ENCODE measurements at regions of chr10 and their contacts with region 1.

Region 1: DNA sequence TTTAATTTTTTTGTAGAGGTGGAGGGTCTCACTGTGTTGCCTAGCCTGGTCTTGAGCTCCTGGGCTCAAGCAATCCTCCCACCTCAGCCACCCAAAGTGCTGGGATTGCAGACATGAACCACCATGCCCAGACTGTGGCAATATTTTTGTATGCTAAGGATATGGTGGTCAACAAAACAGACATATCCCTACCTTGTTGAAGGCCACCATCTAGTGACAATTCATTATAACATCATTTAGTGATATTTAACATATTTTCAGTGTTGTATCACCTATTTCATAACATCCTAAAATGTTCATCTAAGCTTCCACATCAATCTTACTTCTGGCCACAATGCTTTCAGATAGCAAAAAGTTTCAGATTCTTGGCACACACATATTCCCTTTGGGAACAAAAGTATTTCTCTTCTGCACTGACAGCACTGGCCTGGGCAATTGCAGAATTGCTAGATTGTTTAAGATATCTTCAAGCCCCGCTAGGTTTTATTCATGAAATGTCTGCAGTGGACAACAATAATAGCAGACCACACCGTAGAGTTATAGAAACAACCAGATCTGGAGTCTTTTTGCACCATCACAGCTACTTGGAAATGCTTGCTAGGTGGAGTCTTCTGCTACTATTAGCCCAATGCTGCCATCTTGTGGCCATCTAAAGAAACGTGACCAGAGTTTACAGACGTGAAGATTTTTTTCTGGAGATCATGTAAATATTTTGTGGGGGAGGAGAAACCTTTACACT is 58.4 kb downstream of the DNAJC12 start:
- DNase-seq: no peak
- ATAC-seq: peak; percentile 77
- H3K4me3 ChIP-seq: no peak overlapping the region
- H3K27ac ChIP-seq: no peak overlapping the region
- H3K4me1 ChIP-seq: peaks cover 38% of the 10 kb centered on the region
- H3K27me3 ChIP-seq: no peaks in the 10 kb centered on the region
- CTCF ChIP-seq: peak; percentile 65 to 88 (median 72); a peak in 5 of 6 replicates
- EP300 ChIP-seq: no peak
- POLR2A ChIP-seq: no peak
- RAD21 ChIP-seq: peak; percentile 96

Region 2: DNA sequence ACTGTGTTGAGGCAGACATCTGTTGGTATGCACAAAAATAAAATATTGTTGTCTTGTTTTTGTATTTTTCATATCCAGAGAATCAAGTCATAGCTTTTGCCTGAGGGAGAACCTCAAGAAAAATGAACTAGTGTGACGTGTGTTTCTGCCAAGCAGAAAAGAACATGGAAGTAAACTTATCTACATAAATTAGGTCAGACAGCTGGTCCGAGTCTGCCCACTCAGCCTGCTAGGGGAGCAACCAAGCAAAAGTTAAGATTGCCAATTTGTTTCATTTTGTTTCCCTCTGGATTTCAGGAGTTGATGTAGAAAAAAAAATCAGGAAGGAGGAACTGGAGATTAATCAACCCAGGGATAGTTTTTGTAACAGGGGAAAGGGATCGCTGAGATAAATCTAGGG is 1426.2 kb before region 1 on chr10:
- CTCF ChIA-PET with region 1: no interaction called
- POLR2A ChIA-PET with region 1: no interaction called
- RAD21 ChIA-PET with region 1: no interaction called
- SMC1A ChIA-PET with region 1: no interaction called
- in situ Hi-C with region 1: no loop called
- intact Hi-C with region 1: no loop called
- DNase-seq: no peak
- ATAC-seq: no peak
- H3K4me3 ChIP-seq: no peak overlapping the region
- H3K27ac ChIP-seq: no peak overlapping the region
- H3K4me1 ChIP-seq: no peaks in the 10 kb centered on the region
- H3K27me3 ChIP-seq: no peaks in the 10 kb centered on the region
- CTCF ChIP-seq: no peak
- EP300 ChIP-seq: no peak
- POLR2A ChIP-seq: no peak
- RAD21 ChIP-seq: no peak

Region 3: DNA sequence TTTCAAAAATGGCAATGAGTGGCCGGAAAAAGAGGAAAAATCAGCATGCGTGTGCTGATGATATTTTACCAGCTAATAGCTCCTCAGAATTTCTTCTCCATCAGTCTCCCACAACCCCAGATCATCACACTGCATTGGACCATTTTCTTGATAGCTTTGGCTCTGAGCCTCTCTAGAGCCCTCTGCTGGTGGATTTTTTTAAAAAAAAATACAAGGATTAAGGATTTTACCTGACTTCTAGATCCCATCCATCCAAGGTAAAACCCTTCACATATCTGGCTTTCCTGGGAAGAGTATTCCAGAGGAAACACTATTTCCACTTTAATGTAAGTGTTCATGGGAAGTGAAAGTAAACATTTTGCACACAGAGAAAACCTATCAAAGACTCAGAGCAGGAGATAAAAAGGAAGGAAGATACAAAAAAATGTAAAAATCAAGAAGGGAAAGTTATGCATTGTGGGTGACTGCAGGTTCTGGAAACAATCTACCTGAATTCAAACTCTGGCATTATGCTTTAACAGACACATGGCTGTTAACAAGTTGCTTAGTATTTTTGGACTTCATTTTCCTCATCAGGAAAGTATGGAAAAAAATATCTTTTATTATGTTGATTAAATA is 472.9 kb before region 1 on chr10:
- CTCF ChIA-PET with region 1: interaction called, 7 read pairs
- POLR2A ChIA-PET with region 1: no interaction called
- RAD21 ChIA-PET with region 1: interaction called, 3 read pairs
- SMC1A ChIA-PET with region 1: interaction called, 5 read pairs
- in situ Hi-C with region 1: no loop called
- intact Hi-C with region 1: loop called (anchors 5 kb)
- DNase-seq: no peak
- ATAC-seq: no peak; the same call in 2 of the 3 replicates
- H3K4me3 ChIP-seq: no peak overlapping the region
- H3K27ac ChIP-seq: no peak overlapping the region
- H3K4me1 ChIP-seq: no peaks in the 10 kb centered on the region
- H3K27me3 ChIP-seq: no peaks in the 10 kb centered on the region
- CTCF ChIP-seq: peak; percentile 32 to 47 (median 39); a peak in 5 of 6 replicates
- EP300 ChIP-seq: no peak
- POLR2A ChIP-seq: no peak
- RAD21 ChIP-seq: peak; percentile 37; the same call in 1 of the 2 replicates

Region 4: DNA sequence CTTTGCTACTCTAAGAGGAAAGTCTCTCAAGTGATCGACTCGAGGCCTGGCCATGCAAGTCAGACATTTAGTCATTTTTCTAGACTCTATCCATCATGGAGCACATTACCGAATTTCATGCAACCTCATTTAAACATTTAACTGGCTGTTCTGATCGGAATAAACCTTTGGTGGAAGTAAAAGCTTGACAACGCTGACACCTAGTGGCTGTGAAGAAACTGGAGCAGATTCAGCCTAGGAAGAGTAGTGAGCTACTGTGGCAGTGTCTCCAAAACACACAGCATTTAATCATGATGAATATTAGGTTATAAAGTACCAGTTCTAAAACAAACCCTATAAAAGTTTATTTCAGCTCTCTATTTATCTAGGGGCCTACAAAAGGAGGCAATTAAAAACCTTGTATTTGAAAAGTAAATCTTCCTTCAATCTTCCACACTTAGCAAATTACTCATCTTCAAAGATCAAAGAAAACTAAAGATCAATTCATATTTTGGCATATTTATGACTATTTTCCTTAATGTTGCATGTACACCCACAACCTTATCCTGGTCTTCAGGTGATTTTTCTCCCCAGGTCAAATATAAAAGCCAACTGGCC is 258.6 kb before region 1 on chr10:
- CTCF ChIA-PET with region 1: interaction called, 51 read pairs
- POLR2A ChIA-PET with region 1: interaction called, 7 read pairs
- RAD21 ChIA-PET with region 1: interaction called, 35 read pairs
- SMC1A ChIA-PET with region 1: interaction called, 35 read pairs
- in situ Hi-C with region 1: loop called (anchors 10 kb)
- intact Hi-C with region 1: loop called (anchors 1 kb)
- DNase-seq: peak; percentile 2
- ATAC-seq: peak; percentile 97
- H3K4me3 ChIP-seq: no peak overlapping the region
- H3K27ac ChIP-seq: no peak overlapping the region
- H3K4me1 ChIP-seq: no peaks in the 10 kb centered on the region
- H3K27me3 ChIP-seq: no peaks in the 10 kb centered on the region
- CTCF ChIP-seq: peak; percentile 65 to 85 (median 74)
- EP300 ChIP-seq: no peak
- POLR2A ChIP-seq: no peak
- RAD21 ChIP-seq: peak; percentile 89

Region 5: DNA sequence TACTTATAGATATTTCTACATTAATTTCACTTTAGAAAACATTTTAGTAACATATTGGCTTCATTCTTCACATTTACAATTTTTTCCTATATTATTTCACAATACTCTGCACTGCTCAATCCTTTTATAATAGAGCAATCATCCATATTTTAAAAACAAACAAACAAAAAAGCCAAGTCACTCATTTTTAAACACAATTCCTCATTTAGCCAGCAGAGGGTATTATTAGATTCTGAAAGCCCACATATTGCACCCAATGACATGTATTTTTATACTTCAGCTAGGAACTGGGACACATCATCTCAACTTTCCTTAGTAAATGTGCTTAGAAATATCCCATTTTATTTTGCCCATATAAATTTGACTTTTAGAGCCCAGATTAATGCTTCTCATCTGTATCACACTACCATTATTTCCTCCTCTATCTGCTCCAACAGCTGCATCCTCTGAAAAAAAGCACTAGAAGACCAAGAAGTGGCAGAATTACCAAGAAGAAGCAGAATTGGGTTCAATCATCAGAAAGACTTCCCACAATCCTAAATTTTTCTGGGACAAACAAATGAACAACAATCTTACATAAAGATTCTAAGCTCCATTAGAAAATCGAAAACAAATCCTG is 113.1 kb before region 1 on chr10:
- CTCF ChIA-PET with region 1: interaction called, 311 read pairs
- POLR2A ChIA-PET with region 1: interaction called, 13 read pairs
- RAD21 ChIA-PET with region 1: interaction called, 193 read pairs
- SMC1A ChIA-PET with region 1: interaction called, 221 read pairs
- in situ Hi-C with region 1: no loop called
- intact Hi-C with region 1: loop called (anchors 1 kb)
- DNase-seq: no peak
- ATAC-seq: peak; percentile 63
- H3K4me3 ChIP-seq: no peak overlapping the region
- H3K27ac ChIP-seq: no peak overlapping the region
- H3K4me1 ChIP-seq: no peaks in the 10 kb centered on the region
- H3K27me3 ChIP-seq: no peaks in the 10 kb centered on the region
- CTCF ChIP-seq: peak; percentile 12 to 53 (median 25); a peak in 3 of 6 replicates
- EP300 ChIP-seq: no peak
- POLR2A ChIP-seq: no peak
- RAD21 ChIP-seq: peak; percentile 59

Region 6: GRCh38 chr10:67705921-67706320 is 73.7 kb before region 1 on chr10:
- CTCF ChIA-PET with region 1: interaction called, 16 read pairs
- POLR2A ChIA-PET with region 1: no interaction called
- RAD21 ChIA-PET with region 1: interaction called, 4 read pairs
- SMC1A ChIA-PET with region 1: interaction called, 7 read pairs
- in situ Hi-C with region 1: no loop called
- intact Hi-C with region 1: no loop called
- DNase-seq: no peak
- ATAC-seq: no peak
- H3K4me3 ChIP-seq: no peak overlapping the region
- H3K27ac ChIP-seq: no peak overlapping the region
- H3K4me1 ChIP-seq: no peaks in the 10 kb centered on the region
- H3K27me3 ChIP-seq: no peaks in the 10 kb centered on the region
- CTCF ChIP-seq: no peak
- EP300 ChIP-seq: no peak
- POLR2A ChIP-seq: no peak
- RAD21 ChIP-seq: no peak

Region 7: GRCh38 chr10:67764012-67764822 is 15.4 kb before region 1 on chr10:
- CTCF ChIA-PET with region 1: interaction called, 16 read pairs
- POLR2A ChIA-PET with region 1: interaction called, 3 read pairs
- RAD21 ChIA-PET with region 1: interaction called, 23 read pairs
- SMC1A ChIA-PET with region 1: interaction called, 24 read pairs
- in situ Hi-C with region 1: no loop called
- intact Hi-C with region 1: no loop called
- DNase-seq: peak; percentile 94
- ATAC-seq: peak; percentile 88
- H3K4me3 ChIP-seq: peak overlapping the region; percentile 86
- H3K27ac ChIP-seq: peak overlapping the region; percentile 94
- H3K4me1 ChIP-seq: no peaks in the 10 kb centered on the region
- H3K27me3 ChIP-seq: no peaks in the 10 kb centered on the region
- CTCF ChIP-seq: no peak
- EP300 ChIP-seq: peak; percentile 3 to 89; a peak in 1 of 4 replicates
- POLR2A ChIP-seq: peak; percentile 64
- RAD21 ChIP-seq: no peak

Region 8: GRCh38 chr10:67943909-67944308 is 164.3 kb after region 1 on chr10:
- CTCF ChIA-PET with region 1: no interaction called
- POLR2A ChIA-PET with region 1: no interaction called
- RAD21 ChIA-PET with region 1: no interaction called
- SMC1A ChIA-PET with region 1: no interaction called
- in situ Hi-C with region 1: no loop called
- intact Hi-C with region 1: no loop called
- DNase-seq: no peak
- ATAC-seq: no peak
- H3K4me3 ChIP-seq: no peak overlapping the region
- H3K27ac ChIP-seq: no peak overlapping the region
- H3K4me1 ChIP-seq: no peaks in the 10 kb centered on the region
- H3K27me3 ChIP-seq: no peaks in the 10 kb centered on the region
- CTCF ChIP-seq: no peak
- EP300 ChIP-seq: no peak
- POLR2A ChIP-seq: no peak
- RAD21 ChIP-seq: no peak

Measured in GM12878 (cell line).